ENCODE measurements at regions of chr19 and their contacts with region 1.

Region 1: DNA sequence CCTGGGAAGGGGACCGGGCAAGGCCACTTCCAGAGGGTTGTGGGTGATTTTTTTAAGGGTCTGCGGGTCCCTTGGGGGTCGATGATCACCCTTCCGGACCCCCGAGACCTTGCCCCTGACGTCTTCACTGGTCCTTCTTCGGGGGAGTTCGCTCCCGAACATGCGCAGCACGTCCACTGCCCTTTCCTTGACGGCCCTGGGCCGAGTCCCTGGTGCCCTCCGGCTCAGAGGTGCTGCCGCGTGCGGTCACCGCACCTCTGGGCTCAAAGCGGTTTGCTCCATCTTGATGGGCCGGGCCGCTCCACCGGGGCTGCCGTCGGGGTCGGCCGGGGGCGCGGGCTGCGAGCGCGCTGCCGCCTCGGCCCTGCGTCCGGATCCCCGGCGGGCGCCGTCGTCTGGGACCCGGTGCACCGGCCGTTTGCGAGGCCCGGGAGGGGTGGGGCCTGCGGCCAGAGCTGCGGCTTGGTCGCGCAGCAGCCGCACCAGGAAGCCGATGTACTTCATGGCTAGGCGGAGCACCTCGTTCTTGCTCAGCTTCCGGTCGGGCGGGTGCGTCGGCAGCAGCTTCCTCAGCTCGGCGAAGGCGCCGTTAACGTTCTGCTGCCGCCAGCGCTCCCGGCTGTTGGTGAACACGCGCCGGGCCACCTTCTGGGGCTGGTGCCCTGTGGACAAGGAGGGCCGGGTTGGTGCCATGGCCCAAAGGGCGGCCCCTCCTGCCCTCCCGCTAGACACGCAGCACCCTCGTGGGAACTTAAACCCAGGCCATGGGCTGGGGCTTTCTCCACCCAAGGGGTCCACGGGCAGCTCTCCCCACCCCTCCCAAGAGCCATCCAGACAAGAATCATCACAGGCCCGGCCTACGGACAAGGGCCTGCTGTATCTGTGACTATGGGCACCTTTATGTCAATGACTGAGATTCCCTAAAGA is 3.3 kb downstream of the LYL1 start:
- DNase-seq: peak; percentile 79
- H3K4me3 ChIP-seq: peak overlapping the region in 2 of 3 experiments; percentile 10 to 17
- H3K27ac ChIP-seq: peak overlapping the region; percentile 89
- H3K4me1 ChIP-seq: peaks cover 54% of the 10 kb centered on the region
- H3K27me3 ChIP-seq: no peaks in the 10 kb centered on the region
- CTCF ChIP-seq: no peak
- POLR2A ChIP-seq: peak; percentile 84

Region 2: DNA sequence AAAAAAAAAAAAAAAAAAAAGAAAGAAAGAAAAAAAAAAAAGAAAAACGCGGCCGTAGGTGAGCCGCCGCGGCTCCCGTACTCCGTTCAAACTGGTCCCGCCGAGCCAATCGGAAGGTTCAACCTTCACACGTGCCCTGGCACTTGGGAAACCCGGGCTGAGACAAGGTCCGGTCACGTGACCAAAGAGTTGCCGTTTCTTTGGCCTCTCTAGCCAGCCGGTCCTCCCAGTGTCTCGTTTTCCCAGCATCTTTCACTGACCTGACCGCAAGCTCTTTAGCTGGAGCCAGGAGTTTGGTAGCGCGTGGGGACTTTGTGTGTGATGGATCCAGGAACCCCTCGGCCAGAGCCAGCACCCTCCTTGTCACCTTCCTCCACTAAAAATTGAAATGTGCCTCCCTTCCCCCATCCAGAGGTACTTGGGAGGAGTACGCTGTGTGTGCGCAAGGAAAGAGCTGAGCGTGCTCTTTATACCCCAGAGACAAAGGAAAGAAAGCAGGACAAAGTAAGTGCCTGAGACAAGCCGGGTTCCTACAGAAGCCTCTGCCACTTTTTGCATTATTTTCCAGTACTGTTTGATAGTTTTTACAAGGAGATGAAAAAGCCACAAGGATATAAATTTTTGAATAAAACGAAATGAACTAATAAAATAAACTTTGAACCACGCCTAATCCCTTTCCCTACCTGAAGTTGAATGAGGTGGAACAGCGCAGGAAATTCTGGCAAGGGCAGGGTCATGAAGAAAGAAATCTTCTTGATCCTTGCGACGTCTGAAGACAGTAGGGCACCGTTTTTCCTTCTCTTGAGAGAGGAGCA is 376.6 kb before region 1 on chr19:
- CTCF ChIA-PET with region 1: no interaction called
- POLR2A ChIA-PET with region 1: no interaction called
- dilution Hi-C with region 1: no loop called
- intact Hi-C with region 1: loop called (anchors 5 kb)
- DNase-seq: peak; percentile 97
- H3K4me3 ChIP-seq: peak overlapping the region; percentile 62 to 88 (median 62)
- H3K27ac ChIP-seq: peak overlapping the region; percentile 57
- H3K4me1 ChIP-seq: peaks cover 10% of the 10 kb centered on the region
- H3K27me3 ChIP-seq: no peaks in the 10 kb centered on the region
- CTCF ChIP-seq: no peak
- POLR2A ChIP-seq: peak; percentile 62